ENCODE measurements at regions of chr17 and their contacts with region 1.

Region 1: DNA sequence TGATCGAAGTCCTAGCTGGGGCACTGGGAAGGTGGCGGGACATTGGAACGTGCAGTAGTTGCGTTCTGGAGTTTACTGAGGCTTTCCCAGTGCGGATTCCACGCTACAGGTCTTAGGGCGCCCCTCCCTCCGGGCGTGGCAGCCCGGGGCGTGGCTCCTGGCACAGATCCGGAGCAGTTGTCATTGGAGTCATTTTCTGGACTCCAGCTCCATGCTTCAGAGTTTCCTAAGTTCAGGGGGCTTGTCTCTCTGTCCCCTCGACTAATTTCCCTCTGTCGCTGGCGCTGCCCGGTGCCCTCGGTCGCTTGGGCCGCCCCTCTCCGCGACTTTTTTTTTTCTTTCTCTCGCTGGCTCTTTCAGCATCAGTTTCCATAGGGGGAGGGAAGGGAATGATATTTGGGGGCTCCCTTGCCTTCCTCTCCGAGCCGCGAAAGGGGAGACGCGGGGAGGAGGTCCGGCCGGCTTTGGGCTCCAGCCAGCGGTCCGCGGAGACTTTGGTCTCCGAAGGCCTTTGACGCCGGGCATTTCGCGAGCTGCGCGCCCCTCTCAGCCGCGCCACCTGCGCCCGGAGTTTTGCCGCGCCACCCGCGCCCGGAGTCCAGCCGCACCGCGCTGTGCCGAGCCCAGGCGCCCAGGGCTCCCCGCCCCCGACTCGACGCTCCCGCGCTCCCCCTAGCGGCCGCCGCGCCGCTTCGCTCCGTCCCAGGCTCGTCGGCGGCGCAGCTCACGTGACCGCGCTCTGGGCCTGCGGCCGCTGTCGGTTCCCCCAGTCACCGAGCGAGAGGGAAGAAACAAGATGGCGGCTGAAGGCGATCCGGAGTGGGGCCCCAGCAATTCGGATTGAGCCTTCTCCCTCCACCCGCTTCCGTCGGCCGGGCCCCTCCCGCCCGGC is at the start of gene BPTF:
- DNase-seq: peak; percentile 93
- H3K4me3 Mint-ChIP-seq: peak within 1 kb of the TSS; percentile 99
- H3K27ac Mint-ChIP-seq: peak within 1 kb of the TSS; percentile 98
- H3K4me1 Mint-ChIP-seq: peaks cover 27% of the 10 kb centered on the region
- H3K27me3 Mint-ChIP-seq: peaks cover 2% of the 10 kb centered on the region
- total RNA-seq, gene BPTF: 58.1 to 61.9 TPM

Region 2: DNA sequence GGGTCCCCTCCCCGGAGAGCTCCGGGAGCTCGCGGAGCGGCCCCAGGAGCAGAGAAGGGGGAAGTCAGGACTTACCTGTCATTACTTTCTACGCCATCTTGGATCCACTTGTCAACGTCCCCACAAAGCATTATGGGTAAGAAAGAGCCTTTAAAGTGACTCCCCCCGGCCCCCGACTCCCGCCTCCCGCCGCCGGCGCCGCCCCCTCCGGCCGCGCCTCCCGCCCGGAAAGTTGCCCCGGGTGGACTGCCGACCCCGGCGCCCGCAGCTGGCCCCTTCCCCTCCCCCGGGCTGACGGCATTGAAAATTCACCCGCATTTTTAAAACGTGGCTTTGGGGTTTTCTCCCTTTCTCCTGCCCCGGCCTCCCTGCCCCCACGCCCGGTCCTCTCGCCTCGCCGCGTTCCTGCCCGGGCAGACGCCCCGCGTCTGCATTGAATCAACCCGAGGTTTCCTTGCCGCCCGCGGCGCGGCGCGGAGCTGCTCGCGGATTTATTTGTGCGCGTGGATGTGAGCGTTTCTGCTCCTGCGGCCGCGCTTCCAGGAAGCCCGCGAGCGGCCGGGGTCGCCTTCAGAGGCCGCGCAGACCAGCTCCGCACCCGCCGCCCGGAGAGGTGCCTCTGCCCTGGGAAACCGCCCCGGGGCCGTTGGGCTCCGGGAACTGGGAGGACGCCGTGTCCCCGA is 579.8 kb before region 1 on chr17 and contains the start of gene HELZ:
- CTCF ChIA-PET with region 1: no interaction called
- intact Hi-C with region 1: loop called (anchors 10 kb)
- DNase-seq: peak; percentile 73
- H3K4me3 Mint-ChIP-seq: peak within 1 kb of the TSS; percentile 84
- H3K27ac Mint-ChIP-seq: peak within 1 kb of the TSS; percentile 76
- H3K4me1 Mint-ChIP-seq: peaks cover 36% of the 10 kb centered on the region
- H3K27me3 Mint-ChIP-seq: peaks cover 5% of the 10 kb centered on the region
- total RNA-seq, gene HELZ: 34.7 to 39.5 TPM

Region 3: GRCh38 chr17:67475236-67475937 is 349.6 kb before region 1 on chr17:
- CTCF ChIA-PET with region 1: no interaction called
- intact Hi-C with region 1: loop called (anchors 5 kb)
- DNase-seq: peak; percentile 95
- H3K4me3 Mint-ChIP-seq: peak overlapping the region; percentile 60
- H3K27ac Mint-ChIP-seq: peak overlapping the region; percentile 99
- H3K4me1 Mint-ChIP-seq: peaks cover 60% of the 10 kb centered on the region
- H3K27me3 Mint-ChIP-seq: no peaks in the 10 kb centered on the region

Region 4: GRCh38 chr17:67800495-67800928 is 24.5 kb before region 1 on chr17:
- CTCF ChIA-PET with region 1: interaction called, 4 read pairs
- intact Hi-C with region 1: loop called (anchors 2 kb)
- DNase-seq: peak; percentile 73
- H3K4me3 Mint-ChIP-seq: no peak overlapping the region
- H3K27ac Mint-ChIP-seq: no peak overlapping the region
- H3K4me1 Mint-ChIP-seq: no peaks in the 10 kb centered on the region
- H3K27me3 Mint-ChIP-seq: no peaks in the 10 kb centered on the region

Region 5: DNA sequence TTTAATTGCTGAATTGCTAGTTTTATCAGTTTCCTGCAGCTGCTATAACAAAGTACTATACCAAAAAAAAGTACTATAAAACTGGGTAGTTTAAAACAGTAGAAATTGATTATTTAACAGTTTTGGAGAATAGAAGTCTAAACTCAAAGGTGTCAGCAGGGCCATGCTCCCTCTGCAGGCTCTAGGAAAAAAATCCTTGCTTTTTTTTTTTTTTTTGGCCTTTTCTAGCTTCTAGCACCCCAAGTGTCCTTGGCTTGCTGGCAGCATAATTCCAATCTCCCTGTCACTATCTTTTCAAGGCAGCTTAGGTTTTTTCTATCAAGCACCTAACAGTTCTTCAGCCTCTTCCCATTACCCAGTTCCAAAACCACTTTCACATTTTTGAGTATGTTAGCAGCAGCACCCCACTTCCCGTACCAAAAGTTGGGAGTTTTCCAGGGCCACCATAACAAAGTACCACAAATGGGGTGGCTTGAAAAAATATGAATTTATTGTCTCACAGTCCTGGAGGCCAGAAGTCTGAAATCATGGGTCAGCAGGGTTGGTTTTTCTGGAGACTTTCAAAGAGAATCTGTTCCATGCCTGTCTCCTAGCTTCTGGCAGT is 37.7 kb after region 1 on chr17:
- CTCF ChIA-PET with region 1: no interaction called
- intact Hi-C with region 1: loop called (anchors 1 kb)
- DNase-seq: no peak
- H3K4me3 Mint-ChIP-seq: no peak overlapping the region
- H3K27ac Mint-ChIP-seq: no peak overlapping the region
- H3K4me1 Mint-ChIP-seq: peaks cover 55% of the 10 kb centered on the region
- H3K27me3 Mint-ChIP-seq: no peaks in the 10 kb centered on the region

Region 6: DNA sequence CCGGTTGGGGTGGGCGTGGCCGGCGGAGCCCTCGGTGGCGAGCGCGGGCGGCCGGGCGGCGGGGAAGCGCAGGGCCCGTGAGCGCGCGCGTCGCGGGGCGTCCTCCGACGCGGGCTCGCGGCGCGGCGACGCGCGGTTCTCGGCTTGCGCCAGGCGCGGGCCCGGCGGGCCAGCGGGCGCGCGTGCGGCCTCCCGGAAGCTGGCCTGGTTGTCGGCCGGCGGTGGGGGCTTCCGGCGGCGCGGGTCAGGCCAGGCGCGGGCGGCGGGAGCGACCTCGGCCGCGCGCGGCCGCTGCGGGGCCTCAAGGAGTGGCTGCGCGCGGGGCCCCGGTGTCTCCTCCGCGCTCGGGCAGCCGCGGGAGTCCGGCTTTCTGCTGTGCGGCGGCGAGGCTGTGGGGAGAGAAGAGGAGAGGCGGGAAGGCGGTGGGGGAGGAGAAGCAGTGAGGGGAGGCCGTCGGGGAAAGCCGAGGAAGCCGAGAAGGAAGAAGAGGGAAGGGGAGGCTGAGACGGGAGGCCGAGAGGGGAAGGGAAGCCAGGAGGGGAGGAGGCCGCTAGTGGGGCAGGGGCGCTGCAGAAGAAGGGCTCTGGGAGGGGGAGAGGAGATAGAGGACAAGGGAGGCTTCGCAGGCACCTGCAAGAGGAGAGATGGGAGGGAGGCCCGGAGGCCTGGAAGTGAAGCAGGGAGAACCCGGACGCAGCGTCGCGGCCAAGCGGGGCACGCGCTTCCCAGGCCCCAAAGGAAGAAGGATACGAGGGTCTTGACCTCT is 168.8 kb after region 1 on chr17:
- CTCF ChIA-PET with region 1: no interaction called
- intact Hi-C with region 1: loop called (anchors 10 kb)
- DNase-seq: peak; percentile 67
- H3K4me3 Mint-ChIP-seq: peak overlapping the region; percentile 78
- H3K27ac Mint-ChIP-seq: peak overlapping the region; percentile 78
- H3K4me1 Mint-ChIP-seq: peaks cover 30% of the 10 kb centered on the region
- H3K27me3 Mint-ChIP-seq: peaks cover 17% of the 10 kb centered on the region

Region 7: GRCh38 chr17:68035523-68036303 is 210.7 kb after region 1 on chr17 and contains the start of gene KPNA2:
- CTCF ChIA-PET with region 1: no interaction called
- intact Hi-C with region 1: loop called (anchors 1 kb)
- DNase-seq: peak; percentile 94
- H3K4me3 Mint-ChIP-seq: peak within 1 kb of the TSS; percentile 94
- H3K27ac Mint-ChIP-seq: peak within 1 kb of the TSS; percentile 96
- H3K4me1 Mint-ChIP-seq: peaks cover 19% of the 10 kb centered on the region
- H3K27me3 Mint-ChIP-seq: no peaks in the 10 kb centered on the region
- total RNA-seq, gene KPNA2: 186 to 203 TPM

Measured in activated naive CD4-positive, alpha-beta T cell treated with anti-CD3 and anti-CD28 coated beads for 36 hours (primary cell).